ENCODE measurements at regions of chr12 and their contacts with region 1.

Region 1: GRCh38 chr12:69585189-69586062 is at the start of gene CCT2:
- DNase-seq: peak; percentile 88 to 96 (median 95)
- ATAC-seq: peak; percentile 97
- H3K4me3 ChIP-seq: peak within 1 kb of the TSS; percentile 100
- H3K4me3 Mint-ChIP-seq: peak within 1 kb of the TSS; percentile 84 to 97 (median 95)
- H3K27ac ChIP-seq: peak within 1 kb of the TSS; percentile 96
- H3K27ac Mint-ChIP-seq: peak within 1 kb of the TSS; percentile 91 to 98 (median 97)
- H3K4me1 ChIP-seq: peaks cover 7 to 11% of the 10 kb centered on the region in 2 donors
- H3K4me1 Mint-ChIP-seq: peaks cover 9 to 28% (median 17%) of the 10 kb centered on the region in 7 donors
- H3K27me3 ChIP-seq: no peaks in the 10 kb centered on the region
- H3K27me3 Mint-ChIP-seq: no peaks in the 10 kb centered on the region
- total RNA-seq, gene CCT2: 106 to 200 (median 157) TPM

Region 2: DNA sequence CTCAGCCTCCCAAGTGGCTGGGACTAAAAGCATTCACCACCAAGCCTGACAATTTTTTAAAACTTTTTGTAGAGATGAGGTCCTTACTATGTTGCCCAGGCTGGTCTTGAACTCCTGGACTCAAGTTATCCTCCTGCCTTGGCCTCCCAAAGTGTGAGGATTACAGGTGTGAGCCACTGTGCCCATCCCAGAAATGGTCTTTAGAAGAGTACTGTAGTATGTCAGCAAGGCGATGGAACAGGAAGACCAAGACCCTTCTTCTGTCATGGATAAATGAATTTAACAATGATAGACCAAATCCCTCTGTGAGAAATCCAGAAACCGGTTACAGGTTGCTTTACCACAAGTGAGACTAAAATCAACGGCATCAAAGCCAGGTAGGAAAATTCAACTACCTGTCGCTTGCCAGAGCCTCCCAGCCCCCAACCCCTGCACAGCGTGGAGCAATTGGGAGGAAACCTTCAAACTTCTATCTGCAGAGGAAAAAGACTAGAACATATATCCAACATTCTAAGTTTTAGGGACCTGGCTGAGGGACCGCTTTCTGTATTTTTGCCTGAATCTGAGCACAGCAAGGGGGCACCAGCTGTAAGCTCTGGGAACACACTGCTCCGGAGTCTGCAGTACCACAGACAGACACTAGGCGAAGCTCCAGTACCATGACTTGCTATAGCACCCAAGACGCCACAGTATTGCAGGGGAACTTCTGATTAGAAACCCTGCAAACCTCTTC is 294.7 kb before region 1 on chr12:
- CTCF ChIA-PET with region 1: no interaction called
- POLR2A ChIA-PET with region 1: interaction called, 6 read pairs
- intact Hi-C with region 1: loop called in 1 of 2 experiments (anchors 1 kb)
- DNase-seq: peak; percentile 57 to 82 (median 75)
- ATAC-seq: peak; percentile 100
- H3K4me3 ChIP-seq: no peak overlapping the region
- H3K4me3 Mint-ChIP-seq: peak overlapping the region in 2 of 10 donors; percentile 14 to 37
- H3K27ac ChIP-seq: no peak overlapping the region
- H3K27ac Mint-ChIP-seq: peak overlapping the region in 1 of 9 donors; percentile 59
- H3K4me1 ChIP-seq: peaks cover 8% of the 10 kb centered on the region in 2 donors
- H3K4me1 Mint-ChIP-seq: peaks cover 6 to 36% (median 22%) of the 10 kb centered on the region in 7 donors
- H3K27me3 ChIP-seq: no peaks in the 10 kb centered on the region
- H3K27me3 Mint-ChIP-seq: peaks cover 0 to 49% (median 18%) of the 10 kb centered on the region in 5 donors

Region 3: GRCh38 chr12:69359531-69360347 is 225.7 kb before region 1 on chr12 and contains the start of gene YEATS4:
- CTCF ChIA-PET with region 1: no interaction called
- POLR2A ChIA-PET with region 1: interaction called, 3 read pairs
- intact Hi-C with region 1: loop called (anchors 1 kb)
- DNase-seq: peak; percentile 73 to 93 (median 84)
- ATAC-seq: peak; percentile 86
- H3K4me3 ChIP-seq: peak within 1 kb of the TSS; percentile 76
- H3K4me3 Mint-ChIP-seq: peak within 1 kb of the TSS; percentile 82 to 93 (median 89)
- H3K27ac ChIP-seq: peak within 1 kb of the TSS; percentile 93
- H3K27ac Mint-ChIP-seq: peak within 1 kb of the TSS; percentile 80 to 96 (median 91)
- H3K4me1 ChIP-seq: peaks cover 5 to 6% of the 10 kb centered on the region in 2 donors
- H3K4me1 Mint-ChIP-seq: peaks cover 11 to 32% (median 25%) of the 10 kb centered on the region in 7 donors
- H3K27me3 ChIP-seq: no peaks in the 10 kb centered on the region
- H3K27me3 Mint-ChIP-seq: peaks cover 0 to 3% (median 0%) of the 10 kb centered on the region in 5 donors
- total RNA-seq, gene YEATS4: 16.5 to 34.9 (median 21.4) TPM

Region 4: GRCh38 chr12:69570545-69571399 is 14.7 kb before region 1 on chr12:
- CTCF ChIA-PET with region 1: interaction called, 5 read pairs
- POLR2A ChIA-PET with region 1: no interaction called
- intact Hi-C with region 1: loop called (anchors 1 kb)
- DNase-seq: peak in 8 of 9 donors; percentile 31 to 70 (median 58)
- ATAC-seq: peak; percentile 88
- H3K4me3 ChIP-seq: no peak overlapping the region
- H3K4me3 Mint-ChIP-seq: no peak overlapping the region
- H3K27ac ChIP-seq: peak overlapping the region; percentile 56
- H3K27ac Mint-ChIP-seq: no peak overlapping the region
- H3K4me1 ChIP-seq: no peaks in the 10 kb centered on the region
- H3K4me1 Mint-ChIP-seq: peaks cover 0 to 16% (median 0%) of the 10 kb centered on the region in 7 donors
- H3K27me3 ChIP-seq: no peaks in the 10 kb centered on the region
- H3K27me3 Mint-ChIP-seq: no peaks in the 10 kb centered on the region

Region 5: GRCh38 chr12:69639400-69640016 is 54.1 kb after region 1 on chr12:
- CTCF ChIA-PET with region 1: no interaction called
- POLR2A ChIA-PET with region 1: no interaction called
- intact Hi-C with region 1: loop called in 1 of 2 experiments (anchors 2 kb)
- DNase-seq: peak; percentile 10 to 56 (median 47)
- ATAC-seq: peak; percentile 77
- H3K4me3 ChIP-seq: no peak overlapping the region
- H3K4me3 Mint-ChIP-seq: no peak overlapping the region
- H3K27ac ChIP-seq: no peak overlapping the region
- H3K27ac Mint-ChIP-seq: no peak overlapping the region
- H3K4me1 ChIP-seq: no peaks in the 10 kb centered on the region
- H3K4me1 Mint-ChIP-seq: no peaks in the 10 kb centered on the region
- H3K27me3 ChIP-seq: no peaks in the 10 kb centered on the region
- H3K27me3 Mint-ChIP-seq: peaks cover 0 to 4% (median 0%) of the 10 kb centered on the region in 5 donors